ENCODE measurements at regions of chr21 and their contacts with region 1.

Region 1: GRCh38 chr21:25708467-25709065 is 26.1 kb downstream of the ATP5PF start:
- DNase-seq: peak in 2 of 4 donors; percentile 36 to 51
- ATAC-seq: peak; percentile 49
- H3K4me3 ChIP-seq: no peak overlapping the region
- H3K27ac ChIP-seq: no peak overlapping the region
- H3K4me1 ChIP-seq: no peaks in the 10 kb centered on the region
- H3K27me3 ChIP-seq: no peaks in the 10 kb centered on the region
- CTCF ChIP-seq: peak; percentile 68 to 77

Region 2: DNA sequence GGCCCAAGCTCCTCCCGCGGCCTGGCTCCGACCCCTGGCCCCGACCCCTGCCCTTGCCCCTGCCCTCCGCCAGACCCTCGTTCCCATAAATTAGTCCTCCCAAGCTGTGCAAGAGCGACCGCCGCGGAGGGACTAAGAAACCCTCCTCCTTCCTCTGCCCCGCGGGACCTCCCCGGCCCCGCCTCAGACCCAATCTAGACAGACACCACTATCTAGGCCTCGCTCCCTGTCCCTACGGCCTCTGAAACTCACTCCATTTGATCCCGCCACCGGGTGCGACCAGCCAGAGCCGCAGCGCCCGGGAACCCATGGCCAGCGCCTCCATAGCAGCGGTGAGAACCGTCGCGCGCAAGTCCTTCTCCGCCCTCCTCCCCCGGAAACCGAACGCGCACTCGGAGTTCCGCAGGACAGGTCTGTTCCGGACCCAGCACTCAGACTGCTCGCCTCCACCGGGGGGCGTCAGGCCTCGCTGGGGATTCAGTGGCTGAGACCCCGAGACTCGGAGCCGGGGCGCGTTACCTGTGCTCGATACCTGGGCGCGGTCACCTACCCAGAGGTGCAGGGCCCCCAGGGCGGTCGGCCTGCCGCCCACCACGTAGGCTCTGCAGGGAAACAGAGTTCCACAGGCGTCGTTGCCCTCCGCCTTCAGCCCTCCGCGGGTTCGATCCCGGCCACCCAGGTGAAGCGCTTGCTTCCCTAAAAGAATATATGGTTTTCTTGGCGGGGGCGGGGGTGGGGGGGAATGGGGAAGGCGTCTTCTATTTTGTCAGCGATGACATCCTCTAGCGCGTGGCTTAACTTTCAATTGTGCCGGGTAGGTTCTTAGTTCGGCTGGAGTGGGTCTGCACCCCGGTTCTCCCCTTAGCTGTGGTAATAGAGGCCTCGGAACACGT is 101.2 kb before region 1 on chr21 and contains the start of gene MRPL39:
- intact Hi-C with region 1: loop called (anchors 5 to 10 kb)
- DNase-seq: peak; percentile 87 to 96 (median 90)
- ATAC-seq: peak; percentile 98
- H3K4me3 ChIP-seq: peak within 1 kb of the TSS; percentile 70 to 79
- H3K27ac ChIP-seq: peak within 1 kb of the TSS; percentile 72 to 82
- H3K4me1 ChIP-seq: peaks cover 4 to 34% of the 10 kb centered on the region in 2 donors
- H3K27me3 ChIP-seq: no peaks in the 10 kb centered on the region
- CTCF ChIP-seq: peak; percentile 29 to 45
- polyA plus RNA-seq, gene MRPL39: 27.1 to 36.2 (median 33.9) TPM

Region 3: GRCh38 chr21:25615880-25616279 is 92.7 kb before region 1 on chr21:
- intact Hi-C with region 1: loop called in 1 of 2 experiments (anchors 10 kb)
- DNase-seq: no peak
- ATAC-seq: no peak
- H3K4me3 ChIP-seq: no peak overlapping the region
- H3K27ac ChIP-seq: no peak overlapping the region
- H3K4me1 ChIP-seq: no peaks in the 10 kb centered on the region
- H3K27me3 ChIP-seq: no peaks in the 10 kb centered on the region
- CTCF ChIP-seq: no peak

Measured in left lung (tissue), 14 donors.